ENCODE measurements at regions of chr1 and their contacts with region 1.

Region 1: GRCh38 chr1:117534995-117535467 is 70.8 kb upstream of the TENT5C start:
- DNase-seq: no peak
- H3K4me3 ChIP-seq: no peak overlapping the region; the same call in 1 of the 2 replicates
- CTCF ChIP-seq: peak; percentile 65

Region 2: GRCh38 chr1:117359561-117360289 is 175.3 kb before region 1 on chr1:
- CTCF ChIA-PET with region 1: no interaction called
- POLR2A ChIA-PET with region 1: no interaction called
- DNase-seq: no peak
- H3K4me3 ChIP-seq: no peak overlapping the region
- CTCF ChIP-seq: no peak

Region 3: DNA sequence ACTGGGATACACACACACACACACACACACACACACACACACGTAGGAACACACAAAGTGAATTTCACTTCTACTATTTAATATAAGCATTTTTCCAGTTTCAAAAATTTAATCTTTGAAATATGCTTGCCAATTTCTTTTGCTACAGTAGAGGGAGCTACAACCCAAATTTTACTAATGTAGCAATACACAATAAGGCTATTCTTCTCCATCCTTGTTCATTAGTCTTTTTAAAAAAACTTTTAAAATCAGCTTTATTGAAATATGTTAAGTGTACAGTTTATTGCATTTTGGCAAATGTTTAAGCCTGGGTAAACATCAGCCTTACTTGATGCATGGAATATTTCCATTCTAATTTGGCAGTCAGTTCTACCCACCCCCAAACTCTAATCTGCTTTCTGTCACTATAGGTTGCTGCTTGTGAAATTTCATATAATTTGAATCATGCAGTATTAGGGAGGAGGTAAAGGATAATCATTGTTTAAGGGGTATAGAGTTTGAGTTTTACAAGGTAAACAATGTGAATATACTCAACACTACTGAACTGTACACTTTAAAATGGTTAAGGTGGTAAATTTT is 22.2 kb before region 1 on chr1:
- CTCF ChIA-PET with region 1: interaction called, 40 read pairs
- POLR2A ChIA-PET with region 1: no interaction called
- DNase-seq: no peak
- H3K4me3 ChIP-seq: no peak overlapping the region
- CTCF ChIP-seq: peak; percentile 19

Region 4: DNA sequence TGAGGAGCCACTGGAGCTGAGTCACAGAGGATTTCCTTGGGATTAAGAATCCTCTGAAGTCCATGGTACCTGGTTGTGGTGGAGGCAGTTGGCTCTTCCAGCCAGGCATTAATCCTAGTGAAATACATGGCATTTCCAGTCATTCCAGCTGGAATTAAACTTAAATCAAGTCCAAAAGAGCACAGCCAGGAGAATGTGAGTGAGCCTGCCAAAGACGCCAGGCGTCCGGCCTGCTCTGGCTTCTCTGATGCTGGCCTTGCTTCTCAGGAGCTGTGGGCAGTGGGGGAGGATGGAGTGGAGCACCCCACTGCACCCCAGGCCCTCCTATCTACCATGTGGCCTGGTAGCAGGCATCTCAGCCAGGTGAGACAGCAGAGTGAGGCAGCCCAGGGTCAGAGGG is 47.4 kb after region 1 on chr1:
- CTCF ChIA-PET with region 1: interaction called, 10 read pairs
- POLR2A ChIA-PET with region 1: no interaction called
- DNase-seq: no peak
- H3K4me3 ChIP-seq: no peak overlapping the region
- CTCF ChIP-seq: no peak

Region 5: DNA sequence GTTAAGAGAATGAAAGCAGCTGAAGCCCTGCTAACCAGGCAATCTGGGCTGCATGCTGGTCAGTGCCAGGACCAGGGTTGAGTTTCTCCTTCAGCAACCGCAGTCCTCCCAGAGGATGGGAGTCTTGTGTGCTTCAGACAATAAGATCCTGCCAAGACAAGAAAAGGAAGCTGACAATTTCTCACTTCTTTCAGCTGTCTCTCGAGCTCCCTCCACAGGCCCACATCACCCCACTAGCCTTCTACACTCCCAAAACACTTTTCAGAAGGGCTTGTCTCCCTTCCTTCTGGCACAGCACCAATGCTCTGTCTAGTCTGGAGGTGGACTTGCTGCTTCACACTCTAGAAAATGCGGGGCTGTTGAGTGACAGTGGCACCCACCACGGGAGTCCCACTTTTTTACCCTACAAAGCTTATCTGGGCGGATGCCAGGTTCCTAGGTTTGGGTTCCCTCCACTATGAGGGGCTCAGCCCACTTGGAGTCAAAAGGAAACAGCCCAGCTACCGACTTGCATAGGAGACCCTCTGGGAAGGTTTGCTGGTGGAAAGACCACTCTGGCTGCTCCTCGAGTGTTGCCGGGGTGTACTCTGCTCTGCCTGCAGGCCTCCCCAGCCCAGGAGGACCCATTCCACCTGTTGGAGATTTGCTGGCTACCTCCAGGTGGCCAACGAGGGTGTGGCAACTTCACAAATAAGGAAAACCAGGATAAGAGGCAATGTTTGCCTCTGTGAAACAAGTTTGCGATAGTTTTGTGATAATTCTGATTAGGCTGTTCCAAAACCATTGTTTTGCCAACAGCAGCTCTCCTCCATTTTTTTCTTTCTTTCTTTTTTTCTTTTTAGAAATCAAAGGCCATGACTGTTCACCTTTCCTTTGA is 139.7 kb after region 1 on chr1:
- CTCF ChIA-PET with region 1: interaction called, 27 read pairs
- POLR2A ChIA-PET with region 1: no interaction called
- DNase-seq: no peak
- H3K4me3 ChIP-seq: no peak overlapping the region
- CTCF ChIP-seq: peak; percentile 32

Region 6: GRCh38 chr1:117695796-117696490 is 160.9 kb after region 1 on chr1:
- CTCF ChIA-PET with region 1: interaction called, 10 read pairs
- POLR2A ChIA-PET with region 1: no interaction called
- DNase-seq: peak; percentile 82
- H3K4me3 ChIP-seq: no peak overlapping the region; the same call in 1 of the 2 replicates
- CTCF ChIP-seq: no peak

Region 7: DNA sequence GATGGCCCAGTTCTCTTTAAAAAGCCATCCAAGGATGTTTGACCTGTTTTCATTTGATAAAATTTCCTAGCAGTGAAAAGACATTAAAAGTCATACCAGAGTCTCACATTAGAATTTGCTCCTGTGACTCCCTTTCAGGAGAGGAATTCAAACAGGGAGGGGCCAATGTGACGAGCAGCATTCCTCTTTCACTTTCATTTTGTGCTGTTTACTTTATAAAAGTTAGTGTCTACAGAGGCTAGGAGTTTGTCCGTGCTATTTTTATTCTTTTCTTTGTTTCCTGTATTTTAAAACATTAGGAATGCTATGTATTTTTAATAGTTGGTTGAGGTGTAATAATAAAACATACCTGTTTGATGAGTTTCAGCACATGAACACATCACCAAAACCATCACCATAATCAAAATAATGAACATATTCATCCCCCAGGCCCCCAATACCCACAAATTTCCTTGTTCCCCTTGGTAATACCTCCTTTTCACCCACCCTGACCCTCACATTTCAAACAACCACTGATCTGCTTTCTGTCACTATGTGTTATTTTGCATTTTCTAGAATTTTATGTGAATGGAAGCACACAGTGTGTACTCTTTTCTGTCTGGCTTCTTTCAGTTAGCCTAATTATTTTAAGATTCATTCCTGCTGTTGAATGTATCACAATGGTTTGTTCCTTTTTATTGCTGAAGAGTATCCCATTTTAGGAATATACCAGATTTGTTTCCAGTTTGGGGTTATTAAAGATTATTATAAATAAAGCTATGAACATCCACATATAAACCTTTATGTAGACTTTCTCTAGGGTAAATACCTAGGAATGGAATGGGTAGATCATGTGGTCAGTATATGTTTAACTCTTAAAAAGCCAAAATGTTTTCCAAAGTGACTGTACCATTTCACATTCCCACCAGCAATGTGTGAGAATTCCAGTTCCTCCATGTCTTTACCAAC is 200.3 kb after region 1 on chr1:
- CTCF ChIA-PET with region 1: interaction called, 14 read pairs
- POLR2A ChIA-PET with region 1: no interaction called
- DNase-seq: no peak
- H3K4me3 ChIP-seq: peak overlapping the region; percentile 13
- CTCF ChIP-seq: no peak

Measured in AG04449 (cell line).